MCF 10A (cell line): ENCODE measurements at regions of chr1 and their contacts with region 1.

Region 1: DNA sequence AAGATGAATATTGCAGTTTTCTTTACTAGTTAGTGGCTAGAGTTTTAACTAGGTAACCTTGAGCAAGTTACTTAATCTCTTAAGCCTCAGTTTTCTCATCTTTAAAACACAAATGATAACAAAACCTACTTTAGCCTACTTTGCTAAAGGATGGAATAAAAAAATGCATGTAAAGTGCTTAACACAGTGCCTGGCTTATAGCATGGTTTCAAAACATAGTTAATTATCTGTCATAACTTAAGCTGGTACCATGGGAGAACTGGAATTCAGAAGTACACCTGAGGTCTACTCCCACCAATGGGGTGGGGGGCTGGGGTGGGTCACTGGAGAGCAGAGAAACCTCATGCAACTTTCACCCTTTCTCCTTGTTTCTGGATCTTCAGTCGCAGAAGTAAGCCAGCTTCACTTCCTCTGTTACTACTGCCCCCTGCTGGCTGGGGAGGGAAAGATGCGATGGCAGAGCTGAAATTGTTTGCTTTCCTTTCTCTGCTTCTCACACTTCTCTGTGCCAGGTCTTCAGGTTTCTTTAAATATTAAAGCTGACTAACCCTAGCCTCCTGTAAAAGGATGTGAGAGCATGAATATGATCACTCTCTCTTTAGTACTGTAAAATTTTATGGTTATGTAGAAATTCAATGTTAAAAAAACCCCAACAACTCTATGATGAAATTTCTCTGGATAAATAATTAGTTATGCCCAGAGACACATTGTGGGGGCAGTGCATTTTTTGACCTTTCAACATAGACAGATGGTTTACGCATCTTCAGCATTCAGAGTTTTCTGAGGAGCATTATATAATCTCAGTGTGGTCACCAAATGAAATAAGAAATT is 324.2 kb downstream of the HLX start:
- DNase-seq: peak; percentile 94
- H3K4me3 Mint-ChIP-seq: no peak overlapping the region
- H3K27ac Mint-ChIP-seq: no peak overlapping the region
- H3K4me1 Mint-ChIP-seq: peaks cover 6% of the 10 kb centered on the region
- H3K27me3 Mint-ChIP-seq: no peaks in the 10 kb centered on the region
- CTCF ChIP-seq: peak; percentile 99

Region 2: GRCh38 chr1:220655509-220655908 is 547.9 kb before region 1 on chr1:
- CTCF ChIA-PET with region 1: no interaction called
- POLR2A ChIA-PET with region 1: no interaction called
- intact Hi-C with region 1: no loop called
- DNase-seq: no peak
- H3K4me3 Mint-ChIP-seq: no peak overlapping the region
- H3K27ac Mint-ChIP-seq: no peak overlapping the region
- H3K4me1 Mint-ChIP-seq: no peaks in the 10 kb centered on the region
- H3K27me3 Mint-ChIP-seq: no peaks in the 10 kb centered on the region
- CTCF ChIP-seq: no peak

Region 3: GRCh38 chr1:220873868-220874655 is 329.4 kb before region 1 on chr1:
- CTCF ChIA-PET with region 1: interaction called, 150 read pairs
- POLR2A ChIA-PET with region 1: interaction called, 5 read pairs
- intact Hi-C with region 1: loop called (anchors 1 kb)
- DNase-seq: peak; percentile 74
- H3K4me3 Mint-ChIP-seq: no peak overlapping the region
- H3K27ac Mint-ChIP-seq: no peak overlapping the region
- H3K4me1 Mint-ChIP-seq: no peaks in the 10 kb centered on the region
- H3K27me3 Mint-ChIP-seq: no peaks in the 10 kb centered on the region
- CTCF ChIP-seq: peak; percentile 99

Region 4: GRCh38 chr1:220990427-220991339 is 212.8 kb before region 1 on chr1:
- CTCF ChIA-PET with region 1: interaction called, 6 read pairs
- POLR2A ChIA-PET with region 1: no interaction called
- intact Hi-C with region 1: loop called (anchors 1 kb)
- DNase-seq: peak; percentile 79
- H3K4me3 Mint-ChIP-seq: no peak overlapping the region
- H3K27ac Mint-ChIP-seq: no peak overlapping the region
- H3K4me1 Mint-ChIP-seq: peaks cover 15% of the 10 kb centered on the region
- H3K27me3 Mint-ChIP-seq: peaks cover 10% of the 10 kb centered on the region
- CTCF ChIP-seq: peak; percentile 32

Region 5: GRCh38 chr1:221157026-221157761 is 46.2 kb before region 1 on chr1:
- CTCF ChIA-PET with region 1: interaction called, 12 read pairs
- POLR2A ChIA-PET with region 1: no interaction called
- intact Hi-C with region 1: no loop called
- DNase-seq: no peak
- H3K4me3 Mint-ChIP-seq: no peak overlapping the region
- H3K27ac Mint-ChIP-seq: no peak overlapping the region
- H3K4me1 Mint-ChIP-seq: no peaks in the 10 kb centered on the region
- H3K27me3 Mint-ChIP-seq: no peaks in the 10 kb centered on the region
- CTCF ChIP-seq: no peak

Region 6: DNA sequence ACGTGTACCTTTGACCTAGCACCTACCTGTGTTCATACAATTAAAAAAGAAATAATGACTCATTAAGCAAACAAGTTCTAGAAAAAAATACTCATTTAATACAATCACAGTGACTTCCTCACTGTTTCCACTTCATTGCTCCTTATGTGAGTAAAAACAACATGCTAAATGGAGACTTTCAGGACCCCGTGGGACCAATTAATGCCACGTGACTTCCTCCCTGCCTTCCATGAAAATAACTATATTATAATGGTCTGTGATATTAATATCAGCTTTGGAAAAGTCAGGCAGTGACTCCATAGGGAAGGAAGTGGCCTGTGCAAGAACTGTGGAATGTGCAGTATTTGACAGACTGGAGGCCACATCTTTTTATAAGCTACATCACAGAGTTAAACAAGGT is 13.6 kb after region 1 on chr1:
- CTCF ChIA-PET with region 1: interaction called, 40 read pairs
- POLR2A ChIA-PET with region 1: no interaction called
- intact Hi-C with region 1: no loop called
- DNase-seq: no peak
- H3K4me3 Mint-ChIP-seq: no peak overlapping the region
- H3K27ac Mint-ChIP-seq: no peak overlapping the region
- H3K4me1 Mint-ChIP-seq: no peaks in the 10 kb centered on the region
- H3K27me3 Mint-ChIP-seq: no peaks in the 10 kb centered on the region
- CTCF ChIP-seq: no peak

Region 7: GRCh38 chr1:221263831-221264767 is 60.7 kb after region 1 on chr1:
- CTCF ChIA-PET with region 1: interaction called, 12 read pairs
- POLR2A ChIA-PET with region 1: no interaction called
- intact Hi-C with region 1: no loop called
- DNase-seq: peak; percentile 93
- H3K4me3 Mint-ChIP-seq: no peak overlapping the region
- H3K27ac Mint-ChIP-seq: peak overlapping the region; percentile 42
- H3K4me1 Mint-ChIP-seq: peaks cover 5% of the 10 kb centered on the region
- H3K27me3 Mint-ChIP-seq: no peaks in the 10 kb centered on the region
- CTCF ChIP-seq: peak; percentile 72